Sciatic nerve (tissue), 2 donors: ENCODE measurements at regions of chr9 and their contacts with region 1.

Region 1: DNA sequence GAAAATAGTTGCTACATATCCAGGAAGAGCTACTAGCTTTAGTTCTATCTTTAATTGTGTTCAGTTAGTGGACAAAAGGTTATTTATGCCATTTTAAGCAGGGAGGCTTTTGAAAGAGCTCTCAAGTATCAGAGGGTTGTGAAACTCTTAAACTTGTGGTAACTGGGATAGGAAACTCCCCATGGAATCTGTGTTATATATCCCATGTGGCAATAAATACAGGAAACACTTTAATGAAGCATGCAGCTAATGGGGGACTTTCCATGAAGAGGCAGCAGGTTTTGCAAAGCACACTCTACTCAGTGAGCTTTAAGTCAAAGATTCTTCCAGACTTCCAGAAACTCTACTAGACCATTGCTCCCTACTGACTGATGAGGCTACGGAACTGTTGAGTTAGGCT is 805.0 kb upstream of the C9orf72 start:
- DNase-seq: no peak
- ATAC-seq: no peak

Region 2: GRCh38 chr9:28155067-28155466 is 223.2 kb before region 1 on chr9:
- intact Hi-C with region 1: no loop called
- DNase-seq: no peak
- ATAC-seq: no peak

Region 3: DNA sequence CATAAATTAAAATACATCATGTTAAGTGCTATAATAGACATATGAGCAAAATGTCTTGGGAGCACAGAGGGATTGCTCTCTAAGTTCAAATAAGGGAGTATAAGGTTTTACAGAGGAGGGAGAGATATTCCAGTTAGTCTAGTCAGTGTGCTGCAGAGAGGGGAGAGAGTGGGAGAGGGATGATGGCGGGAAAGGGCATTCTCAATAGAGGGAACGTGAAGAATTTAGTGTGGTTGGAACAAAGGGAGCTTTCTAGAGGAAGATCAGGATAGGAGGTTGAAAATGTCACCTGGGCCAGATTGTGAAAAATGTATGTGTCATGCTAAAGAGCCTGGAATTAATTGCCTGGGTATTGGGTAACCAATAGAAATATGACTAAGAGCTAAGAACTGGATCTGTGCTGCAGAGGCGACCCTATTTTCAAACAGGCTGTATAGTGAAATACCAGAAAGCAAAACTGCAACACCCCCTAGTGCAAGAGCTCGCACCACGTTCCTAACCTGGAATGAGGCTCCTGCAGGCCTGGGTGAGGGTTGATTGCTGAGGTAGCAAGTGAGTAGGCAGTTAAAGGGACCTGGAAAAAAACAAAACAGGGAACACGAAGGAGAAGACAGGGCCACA is 13.1 kb before region 1 on chr9:
- intact Hi-C with region 1: no loop called
- DNase-seq: no peak
- ATAC-seq: no peak

Region 4: GRCh38 chr9:28423255-28423654 is 45.0 kb after region 1 on chr9:
- intact Hi-C with region 1: no loop called
- DNase-seq: no peak
- ATAC-seq: no peak

Region 5: GRCh38 chr9:28439688-28440087 is 61.5 kb after region 1 on chr9:
- intact Hi-C with region 1: loop called (anchors 10 kb)
- DNase-seq: no peak
- ATAC-seq: no peak

Region 6: DNA sequence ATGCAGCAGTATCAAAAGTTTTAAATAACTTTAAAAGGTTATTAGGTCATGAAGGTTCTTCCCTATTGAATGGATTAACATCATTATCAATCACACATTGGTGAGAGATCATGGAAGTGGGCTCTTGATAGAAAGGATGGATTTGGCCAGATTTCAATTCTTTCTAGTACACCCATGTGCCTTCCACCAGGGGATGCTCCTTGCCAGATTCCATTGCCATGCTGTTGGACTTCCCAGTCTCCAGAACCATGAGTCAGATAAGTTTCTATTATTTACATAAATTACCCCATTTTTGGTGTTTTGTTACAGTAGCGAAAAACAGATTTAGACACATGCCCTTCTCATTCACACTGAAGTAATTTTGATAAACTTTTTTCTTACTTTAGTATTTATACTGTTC is 205.6 kb after region 1 on chr9:
- intact Hi-C with region 1: no loop called
- DNase-seq: no peak
- ATAC-seq: no peak